Breast epithelium (tissue), 4 donors: ENCODE measurements at regions of chr13 and their contacts with region 1.

Region 1: DNA sequence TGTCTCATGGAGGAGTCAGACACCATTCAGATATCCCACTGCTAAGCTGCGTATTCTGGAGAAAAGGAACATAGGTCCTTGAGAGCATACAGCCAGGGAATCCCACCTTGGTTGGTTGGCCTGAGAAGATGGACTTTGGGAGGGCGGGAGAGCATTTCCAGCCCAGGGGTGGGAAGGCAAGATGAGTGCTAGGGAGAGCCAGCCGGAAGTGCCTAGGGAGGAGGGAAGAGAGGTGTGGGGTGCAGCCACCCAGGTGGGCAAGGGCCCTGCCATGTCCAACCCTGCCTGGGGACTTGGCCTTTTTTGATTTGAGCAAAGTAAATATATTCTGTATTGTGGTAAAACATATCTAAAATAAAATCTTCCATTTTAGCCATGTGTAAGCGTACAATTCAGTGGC is 19.7 kb downstream of the SIAH3 start:
- DNase-seq: no peak
- H3K4me3 ChIP-seq: no peak overlapping the region
- H3K27ac ChIP-seq: no peak overlapping the region
- H3K4me1 ChIP-seq: peaks cover 0 to 6% of the 10 kb centered on the region in 2 donors
- H3K27me3 ChIP-seq: no peaks in the 10 kb centered on the region
- CTCF ChIP-seq: no peak
- POLR2A ChIP-seq: no peak

Region 2: GRCh38 chr13:45847554-45848224 is 15.8 kb after region 1 on chr13:
- intact Hi-C with region 1: loop called (anchors 1 kb)
- DNase-seq: no peak
- H3K4me3 ChIP-seq: no peak overlapping the region
- H3K27ac ChIP-seq: no peak overlapping the region
- H3K4me1 ChIP-seq: peaks cover 0 to 7% of the 10 kb centered on the region in 2 donors
- H3K27me3 ChIP-seq: no peaks in the 10 kb centered on the region
- CTCF ChIP-seq: no peak
- POLR2A ChIP-seq: no peak

Region 3: DNA sequence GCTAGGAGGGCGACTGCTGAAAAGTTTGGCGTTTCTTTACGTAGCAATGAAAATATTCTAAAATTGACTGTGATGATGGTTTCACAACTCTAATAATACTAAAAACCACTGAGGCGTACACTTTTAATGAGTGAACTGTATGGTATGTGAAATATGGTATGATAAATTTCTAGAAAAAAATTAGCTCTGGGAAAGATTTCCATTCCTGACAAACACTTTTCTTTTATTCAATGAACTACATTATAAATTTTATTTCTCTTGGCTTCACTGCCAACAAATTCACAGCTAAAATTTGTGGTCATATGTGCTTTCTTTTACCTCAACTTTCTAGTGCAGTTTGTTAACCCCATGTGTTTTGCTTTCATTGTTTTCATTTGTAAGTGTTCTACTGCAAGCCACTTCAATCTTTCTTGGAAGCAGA is 209.6 kb after region 1 on chr13:
- intact Hi-C with region 1: no loop called
- DNase-seq: no peak
- H3K4me3 ChIP-seq: no peak overlapping the region
- H3K27ac ChIP-seq: no peak overlapping the region
- H3K4me1 ChIP-seq: no peaks in the 10 kb centered on the region
- H3K27me3 ChIP-seq: no peaks in the 10 kb centered on the region
- CTCF ChIP-seq: no peak
- POLR2A ChIP-seq: no peak

Region 4: GRCh38 chr13:46211483-46212351 is 379.9 kb after region 1 on chr13 and contains the start of gene LRRC63:
- intact Hi-C with region 1: no loop called
- DNase-seq: peak; percentile 54 to 70
- H3K4me3 ChIP-seq: peak within 1 kb of the TSS; percentile 45 to 68 (median 55)
- H3K27ac ChIP-seq: peak within 1 kb of the TSS; percentile 2 to 23
- H3K4me1 ChIP-seq: no peaks in the 10 kb centered on the region
- H3K27me3 ChIP-seq: no peaks in the 10 kb centered on the region
- CTCF ChIP-seq: no peak
- POLR2A ChIP-seq: no peak
- total RNA-seq, gene LRRC63: 0.15 to 0.33 (median 0.16) TPM